Sigmoid colon (tissue), 7 donors: ENCODE measurements at regions of chr10 and their contacts with region 1.

Region 1: GRCh38 chr10:32005050-32005449 is 51.2 kb downstream of the KIF5B start:
- DNase-seq: no peak
- H3K4me3 ChIP-seq: no peak overlapping the region
- H3K27ac ChIP-seq: peak overlapping the region in 2 of 4 donors; percentile 26 to 39
- H3K4me1 ChIP-seq: peaks cover 0 to 10% (median 9%) of the 10 kb centered on the region in 4 donors
- H3K27me3 ChIP-seq: no peaks in the 10 kb centered on the region
- CTCF ChIP-seq: peak in 2 of 4 experiments; percentile 19 to 43
- EP300 ChIP-seq: no peak
- POLR2A ChIP-seq: no peak

Region 2: GRCh38 chr10:31977440-31978155 is 27.5 kb before region 1 on chr10:
- intact Hi-C with region 1: no loop called
- DNase-seq: no peak
- H3K4me3 ChIP-seq: no peak overlapping the region
- H3K27ac ChIP-seq: no peak overlapping the region
- H3K4me1 ChIP-seq: no peaks in the 10 kb centered on the region
- H3K27me3 ChIP-seq: no peaks in the 10 kb centered on the region
- CTCF ChIP-seq: no peak
- EP300 ChIP-seq: no peak
- POLR2A ChIP-seq: no peak

Region 3: GRCh38 chr10:32041290-32042028 is 36.4 kb after region 1 on chr10:
- intact Hi-C with region 1: loop called (anchors 5 kb)
- DNase-seq: no peak
- H3K4me3 ChIP-seq: no peak overlapping the region
- H3K27ac ChIP-seq: peak overlapping the region in 2 of 4 donors; percentile 34 to 62
- H3K4me1 ChIP-seq: peaks cover 0 to 88% (median 46%) of the 10 kb centered on the region in 4 donors
- H3K27me3 ChIP-seq: no peaks in the 10 kb centered on the region
- CTCF ChIP-seq: no peak
- EP300 ChIP-seq: no peak
- POLR2A ChIP-seq: no peak